ENCODE measurements at regions of chr7 and their contacts with region 1.

Region 1: GRCh38 chr7:108569381-108570145 is at the starts of genes DNAJB9 and THAP5:
- DNase-seq: peak; percentile 99
- ATAC-seq: peak; percentile 91
- H3K4me3 Mint-ChIP-seq: peak within 1 kb of the TSS; percentile 98
- H3K27ac Mint-ChIP-seq: peak within 1 kb of the TSS; percentile 99
- H3K4me1 Mint-ChIP-seq: peaks cover 40% of the 10 kb centered on the region
- H3K27me3 Mint-ChIP-seq: no peaks in the 10 kb centered on the region
- total RNA-seq, gene DNAJB9: 8.3 to 8.4 TPM
- total RNA-seq, gene THAP5: 30.1 to 43.4 TPM

Region 2: GRCh38 chr7:108384721-108385481 is 184.7 kb before region 1 on chr7:
- CTCF ChIA-PET with region 1: no interaction called
- POLR2A ChIA-PET with region 1: no interaction called
- intact Hi-C with region 1: no loop called
- DNase-seq: no peak
- ATAC-seq: peak; percentile 81
- H3K4me3 Mint-ChIP-seq: no peak overlapping the region
- H3K27ac Mint-ChIP-seq: no peak overlapping the region
- H3K4me1 Mint-ChIP-seq: no peaks in the 10 kb centered on the region
- H3K27me3 Mint-ChIP-seq: peaks cover 4% of the 10 kb centered on the region

Region 3: GRCh38 chr7:108395426-108395825 is 174.1 kb before region 1 on chr7:
- CTCF ChIA-PET with region 1: no interaction called
- POLR2A ChIA-PET with region 1: no interaction called
- intact Hi-C with region 1: no loop called
- DNase-seq: no peak
- ATAC-seq: no peak
- H3K4me3 Mint-ChIP-seq: no peak overlapping the region
- H3K27ac Mint-ChIP-seq: no peak overlapping the region
- H3K4me1 Mint-ChIP-seq: no peaks in the 10 kb centered on the region
- H3K27me3 Mint-ChIP-seq: peaks cover 10% of the 10 kb centered on the region

Region 4: GRCh38 chr7:108511939-108512338 is 57.6 kb before region 1 on chr7:
- CTCF ChIA-PET with region 1: no interaction called
- POLR2A ChIA-PET with region 1: no interaction called
- intact Hi-C with region 1: no loop called
- DNase-seq: no peak
- ATAC-seq: no peak
- H3K4me3 Mint-ChIP-seq: no peak overlapping the region
- H3K27ac Mint-ChIP-seq: no peak overlapping the region
- H3K4me1 Mint-ChIP-seq: peaks cover 3% of the 10 kb centered on the region
- H3K27me3 Mint-ChIP-seq: no peaks in the 10 kb centered on the region

Region 5: DNA sequence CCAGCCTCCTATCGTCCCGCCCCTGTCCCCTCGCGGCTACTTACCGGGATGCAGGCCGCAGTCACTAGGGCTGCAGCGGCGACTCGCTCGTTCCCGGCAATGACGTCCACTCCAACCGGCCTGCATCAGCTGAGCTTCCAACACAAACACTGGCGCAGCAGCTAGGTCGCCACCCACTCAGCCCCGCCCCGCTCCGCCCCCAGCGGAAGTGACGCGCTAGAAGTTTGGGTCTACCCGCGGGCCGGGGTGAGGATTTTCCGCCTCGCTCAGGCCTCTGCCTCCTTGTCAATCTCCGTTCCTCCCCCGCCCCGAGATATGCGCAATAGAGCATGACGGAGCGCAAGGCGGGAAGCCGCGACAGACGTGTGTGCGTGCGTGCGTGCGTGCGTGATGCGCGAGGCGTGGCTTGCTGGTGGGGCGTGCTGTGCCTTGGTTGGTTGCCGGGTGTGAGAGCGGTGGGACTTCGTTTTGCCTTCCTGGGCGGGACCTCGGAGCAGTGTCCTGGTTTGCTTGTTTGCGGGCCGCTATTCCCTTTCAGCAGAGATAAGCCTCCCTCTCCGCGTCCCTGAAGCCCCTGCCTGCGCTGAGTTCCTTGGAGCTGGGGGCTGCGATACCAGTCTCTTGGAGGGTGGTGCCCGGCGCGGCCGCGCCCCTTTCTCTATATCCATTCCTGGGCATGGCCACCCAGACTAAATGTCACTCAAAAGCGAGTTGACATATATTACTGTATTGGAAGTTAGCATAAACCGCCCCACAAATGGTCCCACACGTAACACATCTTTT is 43.4 kb before region 1 on chr7 and contains the start of gene PNPLA8:
- CTCF ChIA-PET with region 1: interaction called, 11 read pairs
- POLR2A ChIA-PET with region 1: interaction called, 25 read pairs
- intact Hi-C with region 1: loop called (anchors 1 kb)
- DNase-seq: peak; percentile 100
- ATAC-seq: peak; percentile 92
- H3K4me3 Mint-ChIP-seq: peak within 1 kb of the TSS; percentile 91
- H3K27ac Mint-ChIP-seq: peak within 1 kb of the TSS; percentile 96
- H3K4me1 Mint-ChIP-seq: peaks cover 37% of the 10 kb centered on the region
- H3K27me3 Mint-ChIP-seq: peaks cover 2% of the 10 kb centered on the region
- total RNA-seq, gene PNPLA8: 14.2 to 18.4 TPM

Measured in activated CD4-positive, alpha-beta T cell treated with anti-CD3 and anti-CD28 coated beads for 36 hours (primary cell).